ENCODE measurements at regions of chr20 and their contacts with region 1.

Region 1: GRCh38 chr20:38165089-38165989 is at the start of gene TGM2:
- DNase-seq: peak; percentile 65 to 71
- ATAC-seq: peak; percentile 75 to 85
- H3K4me3 ChIP-seq: peak within 1 kb of the TSS; percentile 45 to 70 (median 58)
- H3K27ac ChIP-seq: peak within 1 kb of the TSS; percentile 51 to 82 (median 68)
- H3K4me1 ChIP-seq: peaks cover 14 to 20% of the 10 kb centered on the region in 2 donors
- H3K27me3 ChIP-seq: no peaks in the 10 kb centered on the region
- CTCF ChIP-seq: peak; percentile 86 to 99 (median 96)
- POLR2A ChIP-seq: peak; percentile 34 to 75
- total RNA-seq, gene TGM2: 12.8 to 152 (median 58.4) TPM

Region 2: GRCh38 chr20:37365760-37366638 is 799.3 kb before region 1 on chr20:
- in situ Hi-C with region 1: no loop called
- intact Hi-C with region 1: no loop called
- DNase-seq: no peak
- ATAC-seq: no peak
- H3K4me3 ChIP-seq: no peak overlapping the region
- H3K27ac ChIP-seq: no peak overlapping the region
- H3K4me1 ChIP-seq: no peaks in the 10 kb centered on the region
- H3K27me3 ChIP-seq: no peaks in the 10 kb centered on the region
- CTCF ChIP-seq: no peak
- POLR2A ChIP-seq: no peak

Region 3: GRCh38 chr20:37758332-37758731 is 407.0 kb before region 1 on chr20:
- in situ Hi-C with region 1: no loop called
- intact Hi-C with region 1: loop called (anchors 10 kb)
- DNase-seq: no peak
- ATAC-seq: no peak
- H3K4me3 ChIP-seq: no peak overlapping the region
- H3K27ac ChIP-seq: no peak overlapping the region
- H3K4me1 ChIP-seq: peaks cover 5 to 10% of the 10 kb centered on the region in 2 donors
- H3K27me3 ChIP-seq: no peaks in the 10 kb centered on the region
- CTCF ChIP-seq: no peak
- POLR2A ChIP-seq: no peak

Region 4: DNA sequence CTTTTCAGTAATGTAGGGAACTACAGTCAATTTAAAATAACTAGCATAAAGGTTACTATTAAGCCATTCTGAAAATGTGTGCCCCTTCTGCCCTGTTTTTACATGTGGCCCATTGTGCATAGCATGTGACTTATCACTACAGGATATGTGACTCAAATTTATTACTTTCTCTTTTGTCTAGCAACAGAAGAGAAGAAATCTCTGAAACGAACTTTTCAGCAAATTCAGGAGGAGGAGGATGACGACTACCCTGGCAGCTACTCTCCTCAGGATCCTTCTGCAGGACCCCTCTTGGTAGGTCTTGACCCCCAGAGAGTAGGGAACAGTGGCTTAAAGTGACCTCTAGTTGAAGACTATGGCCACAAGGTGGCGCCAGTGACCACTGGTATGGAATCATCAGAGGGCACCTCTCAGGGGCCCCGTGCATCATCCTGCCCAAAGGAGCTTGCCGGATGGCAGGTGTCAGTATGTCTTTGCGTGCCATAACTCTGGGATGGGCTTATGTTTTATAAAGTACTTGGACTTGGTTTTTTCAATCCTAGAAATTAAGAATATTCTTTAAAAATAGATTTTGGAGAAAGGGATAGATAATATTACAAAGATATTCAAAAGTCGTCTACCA is 107.9 kb before region 1 on chr20:
- in situ Hi-C with region 1: loop called in 3 of 4 experiments (anchors 5 kb)
- intact Hi-C with region 1: loop called (anchors 1 kb)
- DNase-seq: peak; percentile 59 to 73
- ATAC-seq: peak; percentile 67 to 90
- H3K4me3 ChIP-seq: no peak overlapping the region
- H3K27ac ChIP-seq: peak overlapping the region in 3 of 4 donors; percentile 8 to 42 (median 14)
- H3K4me1 ChIP-seq: peaks cover 26 to 28% of the 10 kb centered on the region in 2 donors
- H3K27me3 ChIP-seq: no peaks in the 10 kb centered on the region
- CTCF ChIP-seq: peak; percentile 85 to 94 (median 88)
- POLR2A ChIP-seq: no peak

Region 5: GRCh38 chr20:38073307-38074071 is 91.8 kb before region 1 on chr20:
- in situ Hi-C with region 1: loop called in 1 of 4 experiments (anchors 5 kb)
- intact Hi-C with region 1: loop called (anchors 1 kb)
- DNase-seq: peak; percentile 42 to 52
- ATAC-seq: peak; percentile 59 to 64
- H3K4me3 ChIP-seq: no peak overlapping the region
- H3K27ac ChIP-seq: peak overlapping the region; percentile 83 to 88 (median 86)
- H3K4me1 ChIP-seq: peaks cover 46 to 57% of the 10 kb centered on the region in 2 donors
- H3K27me3 ChIP-seq: no peaks in the 10 kb centered on the region
- CTCF ChIP-seq: peak; percentile 59 to 80 (median 74)
- POLR2A ChIP-seq: no peak

Region 6: GRCh38 chr20:38221119-38221589 is 55.8 kb after region 1 on chr20:
- in situ Hi-C with region 1: no loop called
- intact Hi-C with region 1: loop called (anchors 2 kb)
- DNase-seq: peak in 1 of 2 donors; percentile 30
- ATAC-seq: peak; percentile 40 to 60
- H3K4me3 ChIP-seq: no peak overlapping the region
- H3K27ac ChIP-seq: no peak overlapping the region
- H3K4me1 ChIP-seq: no peaks in the 10 kb centered on the region
- H3K27me3 ChIP-seq: no peaks in the 10 kb centered on the region
- CTCF ChIP-seq: peak; percentile 61 to 90 (median 85)
- POLR2A ChIP-seq: no peak